ENCODE measurements at regions of chr10 and their contacts with region 1.

Region 1: DNA sequence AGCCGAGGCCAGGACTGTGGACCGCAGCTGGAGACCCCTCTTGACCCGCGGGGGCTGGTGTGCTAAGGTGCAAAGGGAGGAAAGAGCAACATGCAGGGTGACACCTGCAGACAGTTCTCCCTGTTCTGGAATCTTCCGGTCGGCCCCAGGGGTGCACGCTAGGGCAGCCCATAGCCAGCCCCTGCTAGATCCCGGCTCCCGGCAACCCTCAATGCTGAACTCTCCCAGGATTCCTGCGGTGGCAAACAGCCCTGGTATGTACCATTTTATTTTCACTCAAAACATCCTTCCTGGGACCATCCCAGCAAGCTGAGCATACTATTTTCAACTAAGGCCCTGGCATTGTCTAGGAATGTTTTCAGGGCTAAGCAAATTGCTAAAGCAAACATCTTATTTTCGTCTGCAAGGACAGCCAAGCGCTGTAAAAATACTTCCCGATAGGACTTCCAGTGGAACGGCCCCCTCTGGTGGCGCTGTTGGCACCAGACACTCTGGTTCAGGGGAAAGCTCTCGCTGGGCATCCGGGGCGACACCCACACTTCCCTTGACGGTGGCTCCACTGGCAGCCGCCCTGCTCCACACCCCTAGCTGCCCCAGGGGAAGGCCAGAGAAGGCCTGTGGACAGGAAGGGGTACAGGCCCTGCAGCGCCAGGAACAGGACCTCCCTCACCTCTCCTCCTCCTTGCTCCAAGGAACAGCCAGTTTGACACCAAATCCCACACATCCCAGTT is 99.4 kb downstream of the CTBP2 start:
- DNase-seq: peak; percentile 82 to 90 (median 89)
- H3K4me3 ChIP-seq: no peak overlapping the region
- H3K27ac ChIP-seq: peak overlapping the region; percentile 84
- H3K4me1 ChIP-seq: peaks cover 62% of the 10 kb centered on the region
- H3K27me3 ChIP-seq: no peaks in the 10 kb centered on the region
- CTCF ChIP-seq: peak; percentile 77 to 91 (median 86)
- EP300 ChIP-seq: no peak
- POLR2A ChIP-seq: no peak

Region 2: GRCh38 chr10:124530215-124530665 is 530.8 kb before region 1 on chr10:
- intact Hi-C with region 1: loop called in 2 of 4 experiments (anchors 10 kb)
- DNase-seq: peak; percentile 84 to 92 (median 89)
- H3K4me3 ChIP-seq: no peak overlapping the region
- H3K27ac ChIP-seq: no peak overlapping the region
- H3K4me1 ChIP-seq: peaks cover 10% of the 10 kb centered on the region
- H3K27me3 ChIP-seq: no peaks in the 10 kb centered on the region
- CTCF ChIP-seq: peak; percentile 78 to 86 (median 86)
- EP300 ChIP-seq: no peak
- POLR2A ChIP-seq: no peak

Region 3: GRCh38 chr10:124916585-124917427 is 144.2 kb before region 1 on chr10:
- intact Hi-C with region 1: loop called in 2 of 4 experiments (anchors 10 kb)
- DNase-seq: peak; percentile 98 to 100 (median 99)
- H3K4me3 ChIP-seq: peak overlapping the region; percentile 77
- H3K27ac ChIP-seq: peak overlapping the region; percentile 97 to 98
- H3K4me1 ChIP-seq: peaks cover 6% of the 10 kb centered on the region
- H3K27me3 ChIP-seq: no peaks in the 10 kb centered on the region
- CTCF ChIP-seq: peak in 2 of 3 donors; percentile 14 to 23
- EP300 ChIP-seq: no peak
- POLR2A ChIP-seq: peak; percentile 95

Region 4: GRCh38 chr10:124928087-124928486 is 132.9 kb before region 1 on chr10:
- intact Hi-C with region 1: no loop called
- DNase-seq: no peak
- H3K4me3 ChIP-seq: no peak overlapping the region
- H3K27ac ChIP-seq: no peak overlapping the region
- H3K4me1 ChIP-seq: peaks cover 6% of the 10 kb centered on the region
- H3K27me3 ChIP-seq: no peaks in the 10 kb centered on the region
- CTCF ChIP-seq: no peak
- EP300 ChIP-seq: no peak
- POLR2A ChIP-seq: no peak

Region 5: GRCh38 chr10:124992462-124993344 is 68.3 kb before region 1 on chr10:
- intact Hi-C with region 1: loop called in 3 of 4 experiments (anchors 2 to 10 kb)
- DNase-seq: peak; percentile 84 to 93 (median 87)
- H3K4me3 ChIP-seq: no peak overlapping the region
- H3K27ac ChIP-seq: no peak overlapping the region
- H3K4me1 ChIP-seq: peaks cover 4% of the 10 kb centered on the region
- H3K27me3 ChIP-seq: no peaks in the 10 kb centered on the region
- CTCF ChIP-seq: peak; percentile 72 to 87 (median 76)
- EP300 ChIP-seq: no peak
- POLR2A ChIP-seq: no peak

Region 6: DNA sequence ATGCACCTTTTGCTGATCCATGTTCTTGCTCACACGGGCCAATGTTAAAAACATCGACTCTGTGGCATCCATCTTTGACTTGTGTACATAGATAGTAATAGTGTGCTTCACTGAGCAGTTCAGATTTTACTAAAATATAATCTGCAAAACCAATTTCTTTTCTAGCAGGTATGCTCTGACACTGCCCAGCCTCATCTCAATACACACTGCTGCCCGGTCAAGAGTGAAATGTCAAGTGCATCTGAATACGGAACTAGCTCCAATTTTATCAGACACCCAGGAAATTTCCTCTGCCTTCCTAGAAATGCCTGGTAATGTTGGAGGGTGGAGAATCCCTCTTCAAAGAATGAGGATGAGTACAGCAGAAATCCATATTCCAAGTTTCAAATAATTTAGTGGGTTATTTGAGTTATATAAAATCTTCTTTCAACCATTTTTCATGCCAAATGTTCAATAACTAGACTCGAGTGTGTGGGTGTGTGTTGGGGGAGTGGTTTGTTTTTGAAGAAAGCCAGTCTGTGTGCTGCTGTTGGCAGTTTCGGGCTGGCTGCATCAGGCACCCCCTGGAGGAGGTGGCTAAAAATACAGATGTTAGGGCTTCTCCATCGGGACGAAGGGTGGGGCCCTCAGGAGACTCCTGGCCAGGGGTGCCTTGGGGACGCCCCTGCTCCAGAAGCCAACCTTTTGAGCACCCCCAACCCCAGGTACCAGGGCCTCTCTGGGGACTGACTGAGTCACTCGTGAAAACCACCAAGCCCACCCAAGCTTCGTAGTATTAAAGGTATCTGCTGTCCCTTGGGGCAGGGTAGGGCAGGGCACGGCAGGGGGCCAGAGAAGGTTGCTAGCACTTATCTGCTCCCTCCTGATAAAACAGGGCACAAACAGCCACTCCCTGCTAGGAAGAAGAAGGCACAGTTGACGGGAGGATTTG is 84.0 kb after region 1 on chr10:
- intact Hi-C with region 1: loop called (anchors 5 to 10 kb)
- DNase-seq: peak in 1 of 5 donors; percentile 54
- H3K4me3 ChIP-seq: no peak overlapping the region
- H3K27ac ChIP-seq: no peak overlapping the region
- H3K4me1 ChIP-seq: peaks cover 49% of the 10 kb centered on the region
- H3K27me3 ChIP-seq: no peaks in the 10 kb centered on the region
- CTCF ChIP-seq: peak in 1 of 3 donors; percentile 39
- EP300 ChIP-seq: no peak
- POLR2A ChIP-seq: no peak

Region 7: GRCh38 chr10:125152450-125153368 is 91.7 kb after region 1 on chr10:
- intact Hi-C with region 1: loop called (anchors 5 to 10 kb)
- DNase-seq: peak in 3 of 5 donors; percentile 58 to 72 (median 63)
- H3K4me3 ChIP-seq: peak overlapping the region; percentile 23
- H3K27ac ChIP-seq: peak overlapping the region; percentile 55 to 68
- H3K4me1 ChIP-seq: peaks cover 41% of the 10 kb centered on the region
- H3K27me3 ChIP-seq: no peaks in the 10 kb centered on the region
- CTCF ChIP-seq: no peak
- EP300 ChIP-seq: no peak
- POLR2A ChIP-seq: no peak

Region 8: DNA sequence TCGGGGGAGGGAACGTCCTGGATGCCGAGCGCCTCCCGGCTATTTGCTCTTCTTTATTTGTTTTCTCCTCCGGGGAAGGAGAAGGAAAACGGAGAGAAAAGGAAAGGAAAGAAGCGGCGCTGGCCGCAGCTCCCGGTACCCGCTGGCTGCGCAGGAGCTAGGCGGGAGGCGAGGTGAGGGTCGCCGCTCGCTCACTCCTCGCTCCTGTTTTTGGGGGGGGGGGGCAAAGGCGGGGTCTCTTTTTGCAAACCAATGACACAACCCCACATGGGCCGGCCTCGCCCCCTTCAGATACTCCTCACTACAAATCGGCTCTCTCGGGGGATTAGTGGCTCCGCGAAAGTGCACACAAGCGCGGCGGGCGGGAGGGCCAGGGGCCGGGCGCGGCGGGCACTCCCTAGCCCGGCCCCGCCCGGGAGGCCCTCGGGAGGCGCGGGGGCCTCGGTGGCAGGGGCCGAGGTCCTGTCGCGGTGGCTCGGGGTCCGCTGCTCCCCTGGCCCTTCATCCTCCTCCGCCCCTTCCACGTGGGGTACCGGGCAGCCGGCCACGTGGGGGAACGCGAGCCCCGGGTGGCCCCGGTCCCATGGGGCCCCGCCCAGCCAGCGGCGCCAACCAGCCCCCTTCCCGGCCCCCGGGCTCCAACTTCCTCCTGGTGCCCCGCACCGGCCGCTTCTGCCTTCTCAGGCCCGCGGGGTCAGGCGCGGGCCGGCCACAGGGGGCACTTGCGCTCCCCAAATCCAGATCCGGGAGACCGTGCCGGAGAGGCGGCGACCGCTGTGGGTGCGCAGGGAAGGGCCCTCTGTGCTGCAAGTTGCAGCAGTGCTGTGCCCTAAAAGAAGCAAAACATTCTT is 100.1 kb after region 1 on chr10:
- intact Hi-C with region 1: loop called in 2 of 4 experiments (anchors 10 kb)
- DNase-seq: peak; percentile 81 to 85 (median 83)
- H3K4me3 ChIP-seq: peak overlapping the region; percentile 91
- H3K27ac ChIP-seq: peak overlapping the region; percentile 96 to 97
- H3K4me1 ChIP-seq: peaks cover 2% of the 10 kb centered on the region
- H3K27me3 ChIP-seq: no peaks in the 10 kb centered on the region
- CTCF ChIP-seq: peak in 2 of 3 donors; percentile 39 to 42
- EP300 ChIP-seq: no peak
- POLR2A ChIP-seq: peak; percentile 44

Measured in ovary (tissue), 10 donors.